Prostate gland (tissue), 2 donors: ENCODE measurements at regions of chr2 and their contacts with region 1.

Region 1: DNA sequence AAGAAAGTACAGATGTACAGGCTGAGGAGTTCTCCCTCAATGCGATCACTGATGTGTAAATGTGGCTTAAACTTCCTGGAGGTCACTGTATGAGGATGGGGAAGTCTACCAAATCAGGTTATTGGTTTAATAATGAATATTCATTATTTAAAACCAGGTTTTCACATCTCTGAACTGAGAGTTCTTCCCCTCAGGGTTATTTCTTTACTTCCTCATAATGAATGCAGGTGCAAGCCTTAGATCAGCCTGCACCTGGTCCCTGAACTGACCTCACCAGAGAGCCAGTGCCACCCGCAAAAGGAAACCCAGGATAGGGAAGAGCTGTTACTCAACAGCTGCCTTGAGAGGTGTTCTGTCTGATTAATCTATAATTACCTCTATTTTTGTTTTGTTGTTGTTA is 369.0 kb downstream of the EPHA4 start:
- DNase-seq: no peak
- H3K4me3 ChIP-seq: no peak overlapping the region
- H3K27ac ChIP-seq: no peak overlapping the region
- H3K4me1 ChIP-seq: no peaks in the 10 kb centered on the region
- H3K27me3 ChIP-seq: no peaks in the 10 kb centered on the region
- CTCF ChIP-seq: no peak
- POLR2A ChIP-seq: no peak

Region 2: GRCh38 chr2:221216636-221217035 is 13.5 kb after region 1 on chr2:
- intact Hi-C with region 1: no loop called
- DNase-seq: no peak
- H3K4me3 ChIP-seq: no peak overlapping the region
- H3K27ac ChIP-seq: no peak overlapping the region
- H3K4me1 ChIP-seq: no peaks in the 10 kb centered on the region
- H3K27me3 ChIP-seq: no peaks in the 10 kb centered on the region
- CTCF ChIP-seq: no peak
- POLR2A ChIP-seq: no peak

Region 3: GRCh38 chr2:221429741-221430491 is 226.8 kb after region 1 on chr2:
- intact Hi-C with region 1: loop called (anchors 10 kb)
- DNase-seq: peak; percentile 79
- H3K4me3 ChIP-seq: no peak overlapping the region
- H3K27ac ChIP-seq: no peak overlapping the region
- H3K4me1 ChIP-seq: no peaks in the 10 kb centered on the region
- H3K27me3 ChIP-seq: no peaks in the 10 kb centered on the region
- CTCF ChIP-seq: no peak
- POLR2A ChIP-seq: no peak